B cell (primary cell): ENCODE measurements at regions of chr11 and their contacts with region 1.

Region 1: GRCh38 chr11:35391922-35392813 is 27.2 kb downstream of the SLC1A2 start:
- DNase-seq: peak; percentile 84
- ATAC-seq: peak; percentile 72
- H3K4me3 ChIP-seq: peak overlapping the region in 1 of 5 experiments; percentile 29
- H3K4me3 Mint-ChIP-seq: peak overlapping the region; percentile 38
- H3K27ac ChIP-seq: no peak overlapping the region
- H3K27ac Mint-ChIP-seq: no peak overlapping the region
- H3K4me1 ChIP-seq: peaks cover 10 to 18% of the 10 kb centered on the region in 2 donors
- H3K4me1 Mint-ChIP-seq: peaks cover 23% of the 10 kb centered on the region
- H3K27me3 ChIP-seq: peaks cover 0 to 3% (median 0%) of the 10 kb centered on the region in 4 experiments
- H3K27me3 Mint-ChIP-seq: no peaks in the 10 kb centered on the region
- CTCF ChIP-seq: peak; percentile 99

Region 2: GRCh38 chr11:34585735-34586487 is 806.3 kb before region 1 on chr11:
- CTCF ChIA-PET with region 1: interaction called, 24 read pairs
- POLR2A ChIA-PET with region 1: no interaction called
- intact Hi-C with region 1: loop called (anchors 1 kb)
- DNase-seq: peak; percentile 74
- ATAC-seq: peak; percentile 94
- H3K4me3 ChIP-seq: no peak overlapping the region
- H3K4me3 Mint-ChIP-seq: peak overlapping the region; percentile 33
- H3K27ac ChIP-seq: peak overlapping the region; percentile 43
- H3K27ac Mint-ChIP-seq: peak overlapping the region; percentile 48
- H3K4me1 ChIP-seq: peaks cover 12 to 16% of the 10 kb centered on the region in 2 donors
- H3K4me1 Mint-ChIP-seq: peaks cover 23% of the 10 kb centered on the region
- H3K27me3 ChIP-seq: no peaks in the 10 kb centered on the region
- H3K27me3 Mint-ChIP-seq: no peaks in the 10 kb centered on the region
- CTCF ChIP-seq: peak; percentile 77

Region 3: DNA sequence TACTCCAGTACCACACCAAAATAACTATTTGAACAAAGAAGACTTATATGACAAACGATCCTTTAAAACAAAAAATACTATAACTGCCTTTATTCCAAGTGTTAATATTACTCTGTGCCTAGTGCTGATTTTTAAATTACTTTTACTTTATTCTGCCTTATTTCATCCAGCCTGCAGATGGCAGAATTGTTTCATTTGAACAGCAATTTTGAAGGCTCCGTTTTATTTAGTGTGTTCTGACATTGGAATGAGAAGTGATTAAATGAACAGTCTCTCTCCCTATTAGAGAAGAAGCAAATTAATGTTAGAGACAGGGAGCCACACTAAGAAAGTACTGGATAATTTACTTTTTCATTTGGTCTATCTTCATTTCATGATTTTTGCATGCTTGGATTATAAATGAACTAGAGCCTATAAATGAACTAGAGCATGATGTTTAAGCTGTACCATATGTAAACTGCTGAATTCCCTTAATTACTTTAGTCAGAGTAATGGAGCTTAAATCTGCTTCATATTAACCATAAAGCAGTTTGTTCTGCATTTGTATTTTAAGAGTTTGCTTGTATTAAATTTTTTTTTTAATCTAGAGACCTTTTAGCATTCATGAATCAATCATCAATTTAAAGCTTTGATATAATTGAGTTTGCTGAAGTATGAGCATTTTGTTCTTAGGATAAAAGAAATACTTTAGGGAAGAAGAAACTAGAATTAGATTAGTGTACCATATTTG is 465.9 kb before region 1 on chr11:
- CTCF ChIA-PET with region 1: interaction called, 248 read pairs
- POLR2A ChIA-PET with region 1: interaction called, 3 read pairs
- intact Hi-C with region 1: loop called (anchors 1 kb)
- DNase-seq: peak; percentile 70
- ATAC-seq: peak; percentile 57
- H3K4me3 ChIP-seq: no peak overlapping the region
- H3K4me3 Mint-ChIP-seq: no peak overlapping the region
- H3K27ac ChIP-seq: no peak overlapping the region
- H3K27ac Mint-ChIP-seq: no peak overlapping the region
- H3K4me1 ChIP-seq: no peaks in the 10 kb centered on the region
- H3K4me1 Mint-ChIP-seq: peaks cover 15% of the 10 kb centered on the region
- H3K27me3 ChIP-seq: no peaks in the 10 kb centered on the region
- H3K27me3 Mint-ChIP-seq: no peaks in the 10 kb centered on the region
- CTCF ChIP-seq: peak; percentile 88

Region 4: GRCh38 chr11:34997952-34998528 is 394.1 kb before region 1 on chr11:
- CTCF ChIA-PET with region 1: interaction called, 39 read pairs
- POLR2A ChIA-PET with region 1: no interaction called
- intact Hi-C with region 1: loop called (anchors 1 kb)
- DNase-seq: peak; percentile 63
- ATAC-seq: peak; percentile 56
- H3K4me3 ChIP-seq: peak overlapping the region in 2 of 5 experiments; percentile 2 to 31
- H3K4me3 Mint-ChIP-seq: peak overlapping the region; percentile 59
- H3K27ac ChIP-seq: peak overlapping the region in 1 of 2 donors; percentile 4
- H3K27ac Mint-ChIP-seq: peak overlapping the region; percentile 71
- H3K4me1 ChIP-seq: peaks cover 11 to 16% of the 10 kb centered on the region in 2 donors
- H3K4me1 Mint-ChIP-seq: peaks cover 27% of the 10 kb centered on the region
- H3K27me3 ChIP-seq: no peaks in the 10 kb centered on the region
- H3K27me3 Mint-ChIP-seq: no peaks in the 10 kb centered on the region
- CTCF ChIP-seq: peak; percentile 93

Region 5: DNA sequence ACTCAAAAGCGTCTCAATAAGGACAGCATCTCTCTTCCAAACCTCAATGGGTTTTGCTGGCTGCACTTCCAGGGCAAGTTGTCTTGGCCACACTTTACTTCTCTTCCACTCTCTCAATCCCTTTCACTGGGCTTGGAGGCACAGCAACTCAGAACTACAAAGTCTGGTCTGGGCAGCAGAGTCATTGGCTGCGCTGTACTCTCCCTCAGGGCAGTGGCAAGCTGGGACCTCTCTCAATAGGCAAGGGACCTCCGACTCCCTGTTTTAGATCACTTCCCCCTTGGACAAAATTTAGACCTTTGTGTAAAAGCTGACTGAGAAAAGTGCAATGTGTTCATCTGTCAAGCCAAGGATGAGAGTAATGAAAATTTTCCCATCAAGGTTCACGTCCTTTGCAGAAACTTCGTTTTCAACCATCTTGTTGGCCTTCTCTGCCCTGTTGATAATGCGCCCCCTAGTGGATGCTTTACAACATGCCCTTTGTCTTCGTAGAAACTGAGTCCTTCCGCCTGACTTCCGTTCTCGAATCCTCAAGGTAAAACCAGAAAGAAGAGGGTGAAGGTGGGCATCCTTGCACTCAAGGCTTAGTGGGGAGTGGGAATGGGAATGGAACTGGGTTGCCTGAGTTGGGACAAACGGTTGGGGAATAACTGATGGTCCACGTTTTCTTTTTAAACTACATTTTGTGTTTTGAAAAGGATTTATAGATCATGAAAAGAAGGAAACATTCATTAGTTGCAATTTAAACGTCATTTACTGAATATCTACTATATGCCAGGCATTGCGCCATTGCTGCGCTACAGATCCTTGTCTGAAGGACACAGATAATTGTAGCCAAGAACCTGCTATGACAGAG is 154.1 kb before region 1 on chr11:
- CTCF ChIA-PET with region 1: interaction called, 73 read pairs
- POLR2A ChIA-PET with region 1: no interaction called
- intact Hi-C with region 1: loop called (anchors 1 kb)
- DNase-seq: peak; percentile 81
- ATAC-seq: no peak
- H3K4me3 ChIP-seq: no peak overlapping the region
- H3K4me3 Mint-ChIP-seq: no peak overlapping the region
- H3K27ac ChIP-seq: no peak overlapping the region
- H3K27ac Mint-ChIP-seq: no peak overlapping the region
- H3K4me1 ChIP-seq: peaks cover 6 to 11% of the 10 kb centered on the region in 2 donors
- H3K4me1 Mint-ChIP-seq: peaks cover 22% of the 10 kb centered on the region
- H3K27me3 ChIP-seq: no peaks in the 10 kb centered on the region
- H3K27me3 Mint-ChIP-seq: no peaks in the 10 kb centered on the region
- CTCF ChIP-seq: peak; percentile 90

Region 6: DNA sequence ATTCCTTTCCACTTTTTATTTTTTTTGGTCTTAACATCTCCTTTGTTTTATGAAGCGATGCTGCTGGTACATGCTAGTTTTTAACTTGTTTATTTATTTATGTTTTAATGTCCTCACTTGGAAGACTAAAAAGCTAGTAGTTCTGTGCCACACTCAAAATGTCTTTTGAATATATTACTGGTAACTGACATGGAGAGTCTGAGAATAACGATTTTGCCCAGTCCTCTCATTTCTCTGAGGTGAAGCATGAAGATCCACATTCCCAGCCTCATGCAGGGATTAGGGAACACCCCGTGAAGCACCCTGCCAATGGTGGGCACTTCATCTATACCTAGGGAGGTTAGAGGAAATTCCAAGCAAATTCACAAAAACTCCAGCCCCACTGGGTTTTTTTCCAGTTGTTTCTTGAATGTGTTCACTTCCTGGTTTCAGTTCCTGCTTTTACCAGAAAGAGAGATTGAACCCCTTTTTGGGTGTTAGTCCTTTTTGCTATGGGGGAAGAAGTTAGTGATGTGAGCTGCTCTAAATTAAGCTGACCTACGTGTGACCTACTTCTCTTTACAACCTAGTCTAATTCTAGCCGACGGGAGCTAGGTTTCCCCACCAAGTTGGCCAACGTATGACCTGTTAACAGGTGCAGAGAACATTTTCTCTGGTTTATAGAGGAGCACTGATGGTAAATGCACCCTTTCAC is 79.0 kb before region 1 on chr11:
- CTCF ChIA-PET with region 1: interaction called, 9 read pairs
- POLR2A ChIA-PET with region 1: no interaction called
- intact Hi-C with region 1: loop called (anchors 2 kb)
- DNase-seq: peak; percentile 84
- ATAC-seq: peak; percentile 91
- H3K4me3 ChIP-seq: peak overlapping the region in 2 of 5 experiments; percentile 20 to 42
- H3K4me3 Mint-ChIP-seq: peak overlapping the region; percentile 63
- H3K27ac ChIP-seq: peak overlapping the region; percentile 92 to 93
- H3K27ac Mint-ChIP-seq: peak overlapping the region; percentile 86
- H3K4me1 ChIP-seq: peaks cover 43 to 61% of the 10 kb centered on the region in 2 donors
- H3K4me1 Mint-ChIP-seq: peaks cover 56% of the 10 kb centered on the region
- H3K27me3 ChIP-seq: no peaks in the 10 kb centered on the region
- H3K27me3 Mint-ChIP-seq: no peaks in the 10 kb centered on the region
- CTCF ChIP-seq: no peak